ENCODE measurements at regions of chr10 and their contacts with region 1.

Region 1: DNA sequence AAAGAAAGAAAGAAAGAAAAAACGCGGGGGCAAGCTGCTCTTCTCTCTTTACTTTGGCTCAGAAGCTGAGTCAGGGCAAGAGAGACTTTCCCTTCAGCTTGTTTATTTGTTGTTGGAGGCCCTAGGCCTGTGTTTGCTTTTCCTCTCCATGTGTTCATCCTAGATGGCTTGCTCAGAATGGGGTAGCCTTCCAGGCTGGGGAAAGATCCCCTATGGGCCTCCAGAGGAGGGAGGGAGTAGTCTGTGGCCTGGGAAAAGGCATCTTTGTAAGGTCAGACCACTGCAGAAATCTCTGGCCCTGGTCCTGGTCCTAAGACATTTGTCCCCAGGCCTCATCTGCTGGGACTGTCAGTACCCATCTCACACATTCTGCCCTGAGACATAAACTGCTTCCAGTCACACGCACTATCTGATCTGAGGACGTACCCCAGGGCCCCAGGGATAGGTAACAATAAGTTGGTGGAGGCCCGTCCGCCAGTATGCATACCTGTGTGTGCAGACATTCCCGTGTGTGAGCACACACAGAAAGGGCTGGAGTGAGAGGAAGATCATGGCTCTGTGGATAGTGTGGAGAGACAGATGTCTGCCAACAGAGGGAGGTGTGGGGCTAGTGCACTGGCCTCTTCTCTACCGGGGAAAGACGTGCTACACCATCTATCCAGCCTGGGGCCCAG is 4.9 kb upstream of the SCD start:
- DNase-seq: no peak
- H3K4me3 ChIP-seq: no peak overlapping the region
- H3K27ac ChIP-seq: no peak overlapping the region
- H3K4me1 ChIP-seq: peaks cover 8% of the 10 kb centered on the region
- H3K27me3 ChIP-seq: no peaks in the 10 kb centered on the region
- CTCF ChIP-seq: peak in 2 of 3 experiments; percentile 29 to 49
- POLR2A ChIP-seq: no peak

Region 2: GRCh38 chr10:100419911-100420449 is 77.9 kb after region 1 on chr10:
- intact Hi-C with region 1: no loop called
- DNase-seq: no peak
- H3K4me3 ChIP-seq: no peak overlapping the region
- H3K27ac ChIP-seq: no peak overlapping the region
- H3K4me1 ChIP-seq: no peaks in the 10 kb centered on the region
- H3K27me3 ChIP-seq: no peaks in the 10 kb centered on the region
- CTCF ChIP-seq: no peak
- POLR2A ChIP-seq: no peak

Region 3: GRCh38 chr10:100433253-100434240 is 91.5 kb after region 1 on chr10:
- intact Hi-C with region 1: loop called (anchors 5 kb)
- DNase-seq: peak in 1 of 2 donors; percentile 87
- H3K4me3 ChIP-seq: no peak overlapping the region
- H3K27ac ChIP-seq: no peak overlapping the region
- H3K4me1 ChIP-seq: no peaks in the 10 kb centered on the region
- H3K27me3 ChIP-seq: no peaks in the 10 kb centered on the region
- CTCF ChIP-seq: peak; percentile 99
- POLR2A ChIP-seq: no peak

Measured in vagina (tissue), 2 donors.